ENCODE measurements at regions of chr4 and their contacts with region 1.

Region 1: GRCh38 chr4:13476915-13477314 is 7.2 kb downstream of the RAB28 start:
- DNase-seq: no peak
- H3K4me3 Mint-ChIP-seq: peak overlapping the region; percentile 17
- H3K27ac Mint-ChIP-seq: peak overlapping the region; percentile 22
- H3K4me1 Mint-ChIP-seq: peaks cover 25% of the 10 kb centered on the region
- H3K27me3 Mint-ChIP-seq: no peaks in the 10 kb centered on the region

Region 2: DNA sequence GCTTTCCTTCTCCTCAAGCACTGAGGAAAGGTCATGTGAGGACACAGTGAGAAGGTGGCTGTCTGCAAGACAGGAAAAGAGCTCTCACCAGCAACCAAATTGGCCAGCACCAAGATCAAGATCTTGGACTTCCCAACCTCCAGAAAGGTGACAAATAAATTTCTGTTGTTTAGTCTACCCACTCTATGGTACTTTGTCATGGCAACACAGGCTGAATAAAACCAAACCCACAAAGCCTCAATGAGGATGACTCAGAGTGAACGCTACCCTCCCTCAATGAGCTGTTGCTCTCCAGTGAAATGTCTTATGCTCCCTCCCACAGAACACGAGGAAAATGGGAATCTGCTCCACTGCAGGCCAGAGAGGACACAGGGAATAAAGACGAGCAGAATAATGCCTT is 236.8 kb before region 1 on chr4:
- intact Hi-C with region 1: loop called (anchors 5 kb)
- DNase-seq: no peak
- H3K4me3 Mint-ChIP-seq: no peak overlapping the region
- H3K27ac Mint-ChIP-seq: no peak overlapping the region
- H3K4me1 Mint-ChIP-seq: peaks cover 16% of the 10 kb centered on the region
- H3K27me3 Mint-ChIP-seq: no peaks in the 10 kb centered on the region

Region 3: GRCh38 chr4:13386405-13387107 is 90.4 kb before region 1 on chr4:
- intact Hi-C with region 1: loop called (anchors 5 kb)
- DNase-seq: no peak
- H3K4me3 Mint-ChIP-seq: no peak overlapping the region
- H3K27ac Mint-ChIP-seq: no peak overlapping the region
- H3K4me1 Mint-ChIP-seq: peaks cover 19% of the 10 kb centered on the region
- H3K27me3 Mint-ChIP-seq: no peaks in the 10 kb centered on the region

Region 4: DNA sequence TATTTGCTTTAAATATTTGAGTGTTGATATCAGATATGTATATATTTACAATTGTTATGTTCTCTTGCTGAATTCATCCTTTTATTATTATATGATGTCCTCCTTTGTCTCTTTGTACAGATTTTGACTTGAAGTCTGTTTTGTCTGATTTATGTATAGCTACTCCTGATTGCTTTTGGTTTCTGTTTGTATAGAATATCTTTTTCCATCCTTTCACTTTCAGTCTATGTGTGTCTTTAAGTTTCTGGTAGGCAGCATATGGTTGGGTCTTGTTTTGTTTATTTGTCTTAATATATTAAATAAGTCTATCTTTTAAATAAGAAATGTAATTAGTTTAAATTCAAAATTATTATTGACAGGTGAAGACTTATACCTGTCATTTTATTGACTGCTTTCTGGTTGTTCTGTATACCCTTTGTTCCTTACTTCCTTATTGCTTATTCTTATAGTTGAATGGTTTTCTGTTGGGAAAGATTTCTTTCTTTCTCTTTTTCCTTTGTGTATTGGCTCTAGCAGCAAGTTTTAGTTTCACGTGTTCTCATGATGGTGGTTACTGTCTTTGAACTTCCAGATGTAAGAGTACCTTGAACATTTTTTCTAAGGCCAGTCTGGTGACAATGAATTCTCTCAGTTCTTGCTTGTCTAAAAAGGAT is 23.9 kb before region 1 on chr4:
- intact Hi-C with region 1: loop called (anchors 2 kb)
- DNase-seq: no peak
- H3K4me3 Mint-ChIP-seq: no peak overlapping the region
- H3K27ac Mint-ChIP-seq: peak overlapping the region; percentile 31
- H3K4me1 Mint-ChIP-seq: peaks cover 14% of the 10 kb centered on the region
- H3K27me3 Mint-ChIP-seq: no peaks in the 10 kb centered on the region

Measured in activated T-helper 2 cell treated with anti-CD3 and anti-CD28 coated beads, Interferon-gamma antibody, Interleukin-2, Interleukin-4, amounts not matched to agents 10 μg/mL and 5 μg/mL and 100 μg/mL, durations not matched to agents 14 hours and 24 hours and 36 hours (primary cell).